ENCODE measurements at regions of chr9 and their contacts with region 1.

Region 1: GRCh38 chr9:135105938-135106491 is 18.5 kb downstream of the OLFM1 start:
- DNase-seq: no peak
- ATAC-seq: no peak
- H3K4me3 Mint-ChIP-seq: no peak overlapping the region
- H3K27ac Mint-ChIP-seq: no peak overlapping the region
- H3K4me1 Mint-ChIP-seq: no peaks in the 10 kb centered on the region
- H3K27me3 Mint-ChIP-seq: peaks cover 35% of the 10 kb centered on the region
- CTCF ChIP-seq: no peak

Region 2: GRCh38 chr9:134544388-134545214 is 561.4 kb before region 1 on chr9:
- CTCF ChIA-PET with region 1: no interaction called
- POLR2A ChIA-PET with region 1: no interaction called
- intact Hi-C with region 1: loop called (anchors 5 kb)
- DNase-seq: no peak
- ATAC-seq: no peak
- H3K4me3 Mint-ChIP-seq: no peak overlapping the region
- H3K27ac Mint-ChIP-seq: no peak overlapping the region
- H3K4me1 Mint-ChIP-seq: no peaks in the 10 kb centered on the region
- H3K27me3 Mint-ChIP-seq: peaks cover 8% of the 10 kb centered on the region
- CTCF ChIP-seq: no peak

Measured in activated B cell treated with CpG ODN at 0.5 μM for 24 hours (primary cell).